IMR-90 (cell line): ENCODE measurements at regions of chr6 and their contacts with region 1.

Region 1: DNA sequence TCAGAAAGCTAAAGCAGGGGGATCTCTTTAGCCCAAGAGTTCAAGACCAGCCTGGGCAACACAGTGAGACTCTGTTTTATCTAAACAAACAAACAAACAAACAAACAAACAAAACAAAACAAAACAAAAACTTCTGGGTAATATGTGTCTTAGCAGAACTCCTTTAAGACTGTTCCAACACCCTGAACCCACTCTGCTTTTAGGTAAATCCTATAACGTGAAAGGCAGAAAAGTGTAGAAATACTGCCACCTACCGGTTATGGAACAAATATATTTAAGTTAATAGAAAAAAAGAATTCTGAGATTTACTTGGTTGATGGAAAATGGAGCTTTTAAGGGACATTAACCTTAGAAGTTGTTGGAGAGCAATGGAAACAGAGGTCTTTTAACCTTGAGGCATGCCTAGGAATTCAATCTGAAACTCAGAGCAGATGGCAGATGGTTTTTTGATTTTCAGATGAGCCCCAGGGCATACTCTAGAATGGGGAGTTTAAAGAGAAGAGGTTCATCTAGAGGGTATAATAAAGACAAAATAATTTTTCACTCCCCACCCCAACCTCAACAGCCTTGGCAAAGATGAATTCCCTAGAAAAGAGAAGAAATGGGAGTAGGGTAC is 38.5 kb downstream of the SOD2 start:
- DNase-seq: peak; percentile 67
- ATAC-seq: peak; percentile 72
- H3K4me3 ChIP-seq: no peak overlapping the region
- H3K27ac ChIP-seq: no peak overlapping the region
- H3K4me1 ChIP-seq: no peaks in the 10 kb centered on the region
- H3K27me3 ChIP-seq: no peaks in the 10 kb centered on the region
- CTCF ChIP-seq: peak; percentile 70
- POLR2A ChIP-seq: no peak
- RAD21 ChIP-seq: peak; percentile 72

Region 2: GRCh38 chr6:159174263-159174969 is 480.2 kb before region 1 on chr6:
- CTCF ChIA-PET with region 1: interaction called, 34 read pairs
- POLR2A ChIA-PET with region 1: no interaction called
- dilution Hi-C with region 1: no loop called
- in situ Hi-C with region 1: loop called (anchors 10 kb)
- intact Hi-C with region 1: loop called (anchors 1 kb)
- DNase-seq: peak; percentile 63
- ATAC-seq: peak; percentile 90
- H3K4me3 ChIP-seq: no peak overlapping the region
- H3K27ac ChIP-seq: no peak overlapping the region
- H3K4me1 ChIP-seq: peaks cover 1% of the 10 kb centered on the region; the same call in 1 of the 2 replicates
- H3K27me3 ChIP-seq: peaks cover 22% of the 10 kb centered on the region
- CTCF ChIP-seq: peak; percentile 95
- POLR2A ChIP-seq: no peak
- RAD21 ChIP-seq: peak; percentile 94

Region 3: GRCh38 chr6:159217595-159218275 is 436.9 kb before region 1 on chr6:
- CTCF ChIA-PET with region 1: interaction called, 4 read pairs
- POLR2A ChIA-PET with region 1: no interaction called
- dilution Hi-C with region 1: no loop called
- in situ Hi-C with region 1: no loop called
- intact Hi-C with region 1: loop called (anchors 1 kb)
- DNase-seq: peak; percentile 21
- ATAC-seq: peak; percentile 79
- H3K4me3 ChIP-seq: no peak overlapping the region
- H3K27ac ChIP-seq: no peak overlapping the region
- H3K4me1 ChIP-seq: no peaks in the 10 kb centered on the region
- H3K27me3 ChIP-seq: peaks cover 6% of the 10 kb centered on the region
- CTCF ChIP-seq: peak; percentile 31; the same call in 1 of the 2 replicates
- POLR2A ChIP-seq: no peak
- RAD21 ChIP-seq: peak; percentile 25; the same call in 1 of the 2 replicates

Region 4: GRCh38 chr6:159252955-159253508 is 401.6 kb before region 1 on chr6:
- CTCF ChIA-PET with region 1: interaction called, 12 read pairs
- POLR2A ChIA-PET with region 1: no interaction called
- dilution Hi-C with region 1: no loop called
- in situ Hi-C with region 1: no loop called
- intact Hi-C with region 1: loop called (anchors 1 kb)
- DNase-seq: peak; percentile 45
- ATAC-seq: peak; percentile 94
- H3K4me3 ChIP-seq: no peak overlapping the region
- H3K27ac ChIP-seq: no peak overlapping the region
- H3K4me1 ChIP-seq: no peaks in the 10 kb centered on the region
- H3K27me3 ChIP-seq: no peaks in the 10 kb centered on the region
- CTCF ChIP-seq: peak; percentile 51
- POLR2A ChIP-seq: no peak
- RAD21 ChIP-seq: peak; percentile 27; the same call in 1 of the 2 replicates

Region 5: GRCh38 chr6:159463119-159463829 is 191.3 kb before region 1 on chr6:
- CTCF ChIA-PET with region 1: no interaction called
- POLR2A ChIA-PET with region 1: no interaction called
- dilution Hi-C with region 1: no loop called
- in situ Hi-C with region 1: no loop called
- intact Hi-C with region 1: loop called (anchors 1 kb)
- DNase-seq: peak; percentile 10
- ATAC-seq: no peak
- H3K4me3 ChIP-seq: no peak overlapping the region
- H3K27ac ChIP-seq: no peak overlapping the region
- H3K4me1 ChIP-seq: no peaks in the 10 kb centered on the region
- H3K27me3 ChIP-seq: no peaks in the 10 kb centered on the region
- CTCF ChIP-seq: peak; percentile 35
- POLR2A ChIP-seq: no peak
- RAD21 ChIP-seq: peak; percentile 27; the same call in 1 of the 2 replicates